ENCODE measurements at regions of chr1 and their contacts with region 1.

Region 1: DNA sequence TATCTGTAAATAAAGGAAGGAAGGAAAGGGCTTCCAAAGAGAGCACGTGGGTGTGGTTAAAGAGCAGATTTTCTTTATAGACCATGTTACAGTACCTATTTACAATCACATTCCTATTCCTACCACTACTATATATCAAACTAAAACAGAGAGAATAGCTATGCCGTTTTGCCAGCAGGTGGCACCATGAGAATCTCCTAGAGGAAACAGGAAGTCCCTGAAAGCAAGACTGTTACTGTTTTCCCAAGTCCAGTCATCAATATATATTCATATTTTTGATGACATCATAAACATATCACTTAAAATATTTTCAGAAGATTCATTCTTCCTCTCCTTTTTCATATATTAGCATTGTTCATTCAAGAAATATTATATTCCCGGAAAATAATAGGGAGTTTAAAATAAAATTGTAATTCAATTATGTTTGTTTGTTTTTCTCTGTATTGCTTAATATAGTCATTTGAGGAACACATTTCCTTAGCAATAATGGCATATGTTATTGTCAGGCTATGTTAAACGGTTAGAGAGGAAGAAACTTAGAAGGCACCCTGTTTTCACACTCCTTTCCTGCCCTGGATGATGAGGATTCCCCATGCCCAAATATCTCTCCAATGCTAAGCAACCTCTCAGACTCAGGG is 6.6 kb downstream of the CCDC190 start:
- DNase-seq: peak; percentile 79
- H3K4me3 ChIP-seq: no peak overlapping the region
- H3K27ac ChIP-seq: no peak overlapping the region
- H3K4me1 ChIP-seq: no peaks in the 10 kb centered on the region
- H3K27me3 ChIP-seq: no peaks in the 10 kb centered on the region
- CTCF ChIP-seq: peak; percentile 28 to 73 (median 50)
- POLR2A ChIP-seq: no peak

Region 2: DNA sequence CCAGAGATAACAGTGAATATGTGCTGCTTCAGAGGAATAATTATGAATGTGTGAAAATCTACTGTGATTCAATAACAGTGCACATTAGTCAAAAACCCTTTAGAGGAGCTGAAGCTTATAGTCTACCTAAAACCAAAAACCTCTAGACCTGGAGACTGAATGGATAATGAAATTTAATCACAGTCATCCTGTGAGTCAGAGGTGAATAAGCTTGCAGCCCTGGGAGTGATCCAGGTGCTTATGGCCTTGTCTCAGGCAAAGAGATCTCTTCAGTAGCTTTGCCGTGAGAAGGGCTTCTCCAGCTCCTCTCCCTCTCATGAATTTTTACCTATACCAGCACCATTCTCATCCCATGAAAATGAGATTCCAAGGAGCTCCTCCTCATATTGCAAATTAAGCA is 133.5 kb after region 1 on chr1:
- intact Hi-C with region 1: no loop called
- DNase-seq: no peak
- H3K4me3 ChIP-seq: no peak overlapping the region
- H3K27ac ChIP-seq: no peak overlapping the region
- H3K4me1 ChIP-seq: peaks cover 9% of the 10 kb centered on the region
- H3K27me3 ChIP-seq: no peaks in the 10 kb centered on the region
- CTCF ChIP-seq: no peak
- POLR2A ChIP-seq: no peak

Region 3: DNA sequence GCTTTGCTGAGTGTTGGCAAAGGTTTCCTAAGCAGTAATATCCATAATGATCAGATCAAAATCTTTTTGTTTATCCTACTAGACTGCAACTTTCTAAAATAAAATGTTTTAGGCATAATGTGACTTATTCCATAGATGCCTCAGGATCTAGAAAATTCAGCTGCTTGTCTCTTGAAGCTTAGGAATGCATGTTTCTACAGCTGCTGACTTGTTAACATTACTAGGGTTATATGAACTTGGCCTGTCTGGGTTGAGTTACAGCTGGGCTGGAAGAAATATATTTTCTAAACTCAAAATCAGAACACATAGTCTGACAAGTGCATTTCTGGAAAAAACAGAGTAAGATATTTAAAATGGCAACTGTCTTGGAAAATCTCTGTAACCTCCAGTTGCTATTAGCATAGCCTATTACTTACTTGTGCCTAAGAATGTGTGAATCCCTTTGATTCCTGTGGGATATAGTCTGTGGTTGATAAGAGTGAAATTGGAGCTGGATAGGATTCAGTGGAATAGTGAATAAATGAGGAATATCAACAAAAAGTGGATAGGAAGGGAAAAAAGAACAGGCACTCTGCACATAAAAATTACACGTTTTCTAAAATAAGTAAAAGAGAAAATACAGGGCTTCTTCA is 276.0 kb after region 1 on chr1:
- intact Hi-C with region 1: no loop called
- DNase-seq: no peak
- H3K4me3 ChIP-seq: no peak overlapping the region
- H3K27ac ChIP-seq: no peak overlapping the region
- H3K4me1 ChIP-seq: no peaks in the 10 kb centered on the region
- H3K27me3 ChIP-seq: no peaks in the 10 kb centered on the region
- CTCF ChIP-seq: no peak
- POLR2A ChIP-seq: no peak

Region 4: DNA sequence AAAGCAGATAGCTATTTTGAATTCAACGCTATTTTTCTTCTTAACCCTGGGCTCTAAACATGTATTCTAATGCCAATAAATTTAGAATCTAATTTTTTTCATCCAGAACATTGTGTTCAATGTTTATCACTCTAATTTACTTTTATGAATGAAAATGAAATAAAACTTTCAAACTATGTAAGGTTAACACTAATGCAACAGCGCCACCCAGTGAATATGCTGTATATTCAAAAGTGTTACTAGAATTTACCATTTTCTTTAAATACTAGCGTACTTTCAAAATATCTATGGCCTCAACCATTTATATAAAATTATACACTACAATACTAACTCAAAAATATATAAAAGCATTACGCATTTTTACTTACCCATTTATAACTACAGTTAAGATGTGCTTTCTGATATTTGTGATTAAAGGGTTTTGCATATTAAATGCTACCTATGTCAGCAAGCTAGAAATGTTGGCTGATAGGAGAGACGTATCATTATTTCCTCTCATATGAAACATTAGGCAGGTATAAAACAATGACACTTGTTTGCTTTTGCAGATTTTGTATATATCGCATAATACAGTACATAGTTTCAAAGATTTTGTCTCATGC is 461.5 kb after region 1 on chr1:
- intact Hi-C with region 1: loop called (anchors 10 kb)
- DNase-seq: peak; percentile 60
- H3K4me3 ChIP-seq: no peak overlapping the region
- H3K27ac ChIP-seq: no peak overlapping the region
- H3K4me1 ChIP-seq: peaks cover 2% of the 10 kb centered on the region
- H3K27me3 ChIP-seq: no peaks in the 10 kb centered on the region
- CTCF ChIP-seq: peak; percentile 47 to 77 (median 49)
- POLR2A ChIP-seq: no peak

Measured in testis (tissue), 5 donors.